ENCODE measurements at regions of chr2 and their contacts with region 1.

Region 1: GRCh38 chr2:205885492-205886099 is 200.4 kb downstream of the INO80D start:
- DNase-seq: peak; percentile 91
- H3K4me3 Mint-ChIP-seq: peak overlapping the region; percentile 31
- H3K27ac Mint-ChIP-seq: no peak overlapping the region
- H3K4me1 Mint-ChIP-seq: peaks cover 9% of the 10 kb centered on the region
- H3K27me3 Mint-ChIP-seq: peaks cover 9% of the 10 kb centered on the region
- CTCF ChIP-seq: peak; percentile 97

Region 2: GRCh38 chr2:205629027-205629817 is 256.4 kb before region 1 on chr2:
- CTCF ChIA-PET with region 1: no interaction called
- intact Hi-C with region 1: no loop called
- DNase-seq: no peak
- H3K4me3 Mint-ChIP-seq: no peak overlapping the region
- H3K27ac Mint-ChIP-seq: no peak overlapping the region
- H3K4me1 Mint-ChIP-seq: no peaks in the 10 kb centered on the region
- H3K27me3 Mint-ChIP-seq: no peaks in the 10 kb centered on the region
- CTCF ChIP-seq: no peak

Region 3: GRCh38 chr2:205766779-205767359 is 118.7 kb before region 1 on chr2:
- CTCF ChIA-PET with region 1: no interaction called
- intact Hi-C with region 1: loop called (anchors 2 kb)
- DNase-seq: peak; percentile 69
- H3K4me3 Mint-ChIP-seq: no peak overlapping the region
- H3K27ac Mint-ChIP-seq: peak overlapping the region; percentile 52
- H3K4me1 Mint-ChIP-seq: peaks cover 57% of the 10 kb centered on the region
- H3K27me3 Mint-ChIP-seq: no peaks in the 10 kb centered on the region
- CTCF ChIP-seq: peak; percentile 83

Region 4: DNA sequence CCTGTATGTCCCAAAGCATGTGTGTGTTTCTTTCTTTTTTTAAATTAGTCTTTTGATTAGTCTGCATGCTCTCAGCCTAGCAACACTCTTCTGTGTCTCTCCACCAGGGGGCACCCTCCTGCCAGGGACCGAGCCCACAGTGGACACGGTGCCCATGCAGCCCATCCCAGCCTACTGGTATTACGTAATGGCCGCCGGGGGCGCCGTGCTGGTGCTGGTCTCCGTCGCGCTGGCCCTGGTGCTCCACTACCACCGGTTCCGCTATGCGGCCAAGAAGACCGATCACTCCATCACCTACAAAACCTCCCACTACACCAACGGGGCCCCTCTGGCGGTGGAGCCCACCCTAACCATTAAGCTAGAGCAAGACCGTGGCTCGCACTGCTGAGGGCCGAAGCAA is 109.5 kb before region 1 on chr2:
- CTCF ChIA-PET with region 1: interaction called, 6 read pairs
- intact Hi-C with region 1: loop called (anchors 1 kb)
- DNase-seq: peak; percentile 76
- H3K4me3 Mint-ChIP-seq: no peak overlapping the region
- H3K27ac Mint-ChIP-seq: no peak overlapping the region
- H3K4me1 Mint-ChIP-seq: peaks cover 5% of the 10 kb centered on the region
- H3K27me3 Mint-ChIP-seq: no peaks in the 10 kb centered on the region
- CTCF ChIP-seq: peak; percentile 67

Measured in Calu3 (cell line).